Activated CD4-positive, alpha-beta memory T cell treated with anti-CD3 and anti-CD28 coated beads for 36 hours (primary cell): ENCODE measurements at regions of chr11 and their contacts with region 1.

Region 1: DNA sequence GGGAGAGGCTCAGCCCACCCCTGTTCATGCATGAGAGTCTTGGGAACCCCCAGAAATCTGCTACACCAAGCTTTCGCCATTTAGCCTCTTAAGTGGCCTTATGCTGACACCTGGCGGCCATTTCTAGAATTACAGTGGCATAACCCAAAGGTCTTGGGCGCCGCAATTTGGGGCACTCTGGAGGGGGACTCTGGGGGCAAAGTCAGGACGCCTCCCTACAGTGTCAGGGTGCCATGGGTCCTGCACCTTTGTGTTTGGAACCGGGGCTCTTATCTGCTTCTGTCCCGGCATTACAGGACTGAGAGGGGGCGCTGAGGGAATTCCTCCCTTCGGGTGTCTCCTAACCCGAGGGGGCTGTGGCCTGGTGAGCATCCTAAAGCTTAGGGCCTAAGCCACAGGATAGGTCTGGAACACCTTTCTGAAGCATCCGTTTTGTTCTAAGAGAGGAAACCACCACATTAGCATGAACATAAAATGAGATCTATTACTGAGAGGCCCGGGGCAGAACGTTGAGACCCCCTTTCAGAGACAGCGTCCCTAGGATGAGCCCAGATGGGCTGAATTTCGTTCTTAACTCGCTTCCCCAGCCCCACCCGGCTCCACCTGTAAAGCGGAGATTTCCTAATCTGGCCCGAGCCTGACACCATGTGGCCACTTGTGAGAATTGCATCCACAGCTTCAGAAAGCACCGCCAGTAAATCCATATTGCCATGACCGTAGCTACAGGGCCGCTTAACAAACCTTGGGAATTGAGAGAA is 9.3 kb downstream of the INS start:
- DNase-seq: peak; percentile 86
- H3K4me3 Mint-ChIP-seq: no peak overlapping the region
- H3K27ac Mint-ChIP-seq: no peak overlapping the region
- H3K4me1 Mint-ChIP-seq: peaks cover 5% of the 10 kb centered on the region
- H3K27me3 Mint-ChIP-seq: peaks cover 32% of the 10 kb centered on the region

Region 2: DNA sequence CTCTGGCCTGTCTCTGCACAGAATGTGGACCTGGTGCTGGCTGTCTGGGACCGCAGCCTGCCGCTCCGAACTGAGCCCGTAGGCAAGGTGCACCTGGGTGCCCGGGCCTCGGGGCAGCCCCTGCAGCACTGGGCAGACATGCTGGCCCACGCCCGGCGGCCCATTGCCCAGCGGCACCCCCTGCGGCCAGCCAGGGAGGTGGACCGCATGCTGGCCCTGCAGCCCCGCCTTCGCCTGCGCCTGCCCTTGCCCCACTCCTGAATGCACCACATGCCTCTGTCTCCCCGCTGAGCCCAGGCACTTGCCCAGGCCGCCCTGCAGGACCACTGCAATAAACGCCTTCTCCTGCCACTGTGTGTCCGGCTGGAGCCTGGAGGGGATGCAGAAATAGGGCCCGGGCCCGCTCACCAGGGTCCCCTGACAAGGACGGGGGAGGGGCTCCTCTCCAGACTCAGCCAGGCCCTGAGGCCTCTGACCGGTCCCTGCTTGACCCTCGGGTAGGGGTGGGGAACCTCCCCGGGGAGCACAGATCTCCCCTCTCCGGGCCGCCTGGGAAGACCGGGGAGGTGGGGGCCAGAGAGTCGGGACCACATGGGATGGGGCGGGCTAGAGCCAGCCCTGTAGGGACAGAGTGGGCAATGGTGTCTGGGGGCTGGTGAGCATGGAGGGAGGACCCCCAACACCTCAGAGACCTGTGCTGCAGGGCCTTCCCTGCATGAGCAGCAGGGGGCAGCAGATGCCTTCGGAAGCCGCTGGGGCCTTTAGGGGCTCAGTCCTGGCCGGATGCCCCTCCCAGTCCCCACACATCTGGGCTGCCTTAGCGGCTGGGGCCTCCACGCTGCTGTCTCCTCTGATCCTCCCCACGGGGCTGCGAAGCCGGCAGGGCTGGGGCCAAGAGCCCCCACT is 314.3 kb before region 1 on chr11:
- CTCF ChIA-PET with region 1: interaction called, 43 read pairs
- POLR2A ChIA-PET with region 1: no interaction called
- intact Hi-C with region 1: loop called (anchors 1 kb)
- DNase-seq: peak; percentile 83
- H3K4me3 Mint-ChIP-seq: no peak overlapping the region
- H3K27ac Mint-ChIP-seq: no peak overlapping the region
- H3K4me1 Mint-ChIP-seq: peaks cover 5% of the 10 kb centered on the region
- H3K27me3 Mint-ChIP-seq: peaks cover 3% of the 10 kb centered on the region

Region 3: GRCh38 chr11:1917671-1918516 is 233.8 kb before region 1 on chr11:
- CTCF ChIA-PET with region 1: interaction called, 11 read pairs
- POLR2A ChIA-PET with region 1: no interaction called
- intact Hi-C with region 1: no loop called
- DNase-seq: no peak
- H3K4me3 Mint-ChIP-seq: no peak overlapping the region
- H3K27ac Mint-ChIP-seq: no peak overlapping the region
- H3K4me1 Mint-ChIP-seq: peaks cover 9% of the 10 kb centered on the region
- H3K27me3 Mint-ChIP-seq: peaks cover 10% of the 10 kb centered on the region

Region 4: DNA sequence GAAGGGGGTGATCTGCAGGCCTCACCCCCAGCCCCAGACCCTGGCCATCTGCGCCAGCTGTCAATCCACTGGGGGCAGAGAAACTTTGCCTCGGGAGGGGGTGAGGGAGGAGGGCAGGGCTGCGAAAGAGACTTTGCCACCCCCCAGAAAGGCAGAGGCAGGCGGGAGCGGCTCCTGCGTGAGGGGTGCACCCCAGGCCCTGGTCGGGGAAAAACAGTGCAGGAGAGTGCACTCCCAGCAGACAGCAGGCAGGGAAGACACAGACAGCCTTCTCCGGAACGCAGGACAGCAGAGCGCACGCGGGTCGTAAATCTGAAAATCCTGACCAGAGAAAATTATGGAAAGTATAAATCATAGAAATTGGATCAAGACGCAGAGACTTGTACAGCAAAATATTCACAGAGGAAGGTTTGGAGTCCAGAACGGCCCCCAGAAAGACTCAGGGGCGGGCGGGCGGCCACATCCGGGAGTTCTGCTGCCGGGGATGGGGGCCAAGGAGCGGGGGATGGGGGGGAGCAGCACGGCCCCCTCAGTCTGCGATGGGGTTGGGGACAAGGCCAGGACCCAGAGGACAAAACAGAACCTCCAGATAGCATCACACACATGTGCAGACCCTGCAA is 212.6 kb before region 1 on chr11:
- CTCF ChIA-PET with region 1: no interaction called
- POLR2A ChIA-PET with region 1: no interaction called
- intact Hi-C with region 1: no loop called
- DNase-seq: no peak
- H3K4me3 Mint-ChIP-seq: no peak overlapping the region
- H3K27ac Mint-ChIP-seq: no peak overlapping the region
- H3K4me1 Mint-ChIP-seq: peaks cover 4% of the 10 kb centered on the region
- H3K27me3 Mint-ChIP-seq: no peaks in the 10 kb centered on the region

Region 5: GRCh38 chr11:2002807-2003206 is 148.9 kb before region 1 on chr11:
- CTCF ChIA-PET with region 1: interaction called, 43 read pairs
- POLR2A ChIA-PET with region 1: no interaction called
- intact Hi-C with region 1: no loop called
- DNase-seq: no peak
- H3K4me3 Mint-ChIP-seq: no peak overlapping the region
- H3K27ac Mint-ChIP-seq: no peak overlapping the region
- H3K4me1 Mint-ChIP-seq: no peaks in the 10 kb centered on the region
- H3K27me3 Mint-ChIP-seq: no peaks in the 10 kb centered on the region

Region 6: DNA sequence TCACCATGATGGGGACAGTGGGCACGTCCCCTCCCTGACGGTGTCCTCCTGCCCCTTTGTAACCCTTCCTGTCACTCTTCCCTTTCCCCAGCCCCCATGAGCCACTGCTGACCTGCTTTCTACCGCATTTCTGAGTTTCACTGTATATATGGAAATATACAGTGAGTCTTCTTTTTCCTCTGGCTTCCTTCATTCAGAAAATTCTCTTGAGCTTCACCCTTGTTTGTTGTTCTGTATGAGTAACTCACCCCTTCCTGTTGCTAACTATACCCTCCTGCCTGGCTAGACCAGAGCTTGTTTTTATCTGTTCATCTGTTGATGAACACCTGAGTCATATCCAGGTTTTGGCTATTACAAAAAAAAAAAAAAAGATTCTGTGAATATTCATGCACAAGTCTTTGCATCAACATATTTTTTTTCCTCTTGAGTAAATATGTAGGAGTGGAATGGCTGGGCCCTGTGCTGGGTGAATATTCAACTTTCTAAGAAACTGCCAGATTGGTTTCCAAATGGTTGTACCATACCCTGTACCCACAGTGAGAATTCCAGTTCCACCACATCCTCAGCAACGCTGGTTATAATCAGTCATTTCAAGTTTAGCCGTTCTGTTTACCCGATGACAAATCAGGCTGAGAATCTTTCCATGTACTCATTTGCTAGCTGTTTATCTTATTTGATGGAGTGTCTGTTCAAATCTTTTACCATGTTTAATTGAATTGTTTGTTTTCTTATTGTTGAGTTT is 74.4 kb before region 1 on chr11:
- CTCF ChIA-PET with region 1: interaction called, 45 read pairs
- POLR2A ChIA-PET with region 1: no interaction called
- intact Hi-C with region 1: no loop called
- DNase-seq: peak; percentile 77
- H3K4me3 Mint-ChIP-seq: no peak overlapping the region
- H3K27ac Mint-ChIP-seq: peak overlapping the region; percentile 80
- H3K4me1 Mint-ChIP-seq: peaks cover 20% of the 10 kb centered on the region
- H3K27me3 Mint-ChIP-seq: peaks cover 22% of the 10 kb centered on the region